Caco-2 (cell line): ENCODE measurements at regions of chr19 and their contacts with region 1.

Region 1: GRCh38 chr19:41449079-41449864 is 6.3 kb downstream of the ERICH4 start:
- DNase-seq: peak; percentile 80 to 85
- H3K4me3 ChIP-seq: no peak overlapping the region
- H3K4me3 Mint-ChIP-seq: peak overlapping the region; percentile 49
- H3K27ac Mint-ChIP-seq: no peak overlapping the region
- H3K4me1 ChIP-seq: no peaks in the 10 kb centered on the region
- H3K4me1 Mint-ChIP-seq: no peaks in the 10 kb centered on the region
- H3K27me3 ChIP-seq: no peaks in the 10 kb centered on the region
- H3K27me3 Mint-ChIP-seq: peaks cover 4% of the 10 kb centered on the region
- CTCF ChIP-seq: peak; percentile 99

Region 2: GRCh38 chr19:41420101-41420880 is 29.0 kb before region 1 on chr19:
- CTCF ChIA-PET with region 1: no interaction called
- POLR2A ChIA-PET with region 1: no interaction called
- intact Hi-C with region 1: no loop called
- DNase-seq: no peak
- H3K4me3 ChIP-seq: no peak overlapping the region
- H3K4me3 Mint-ChIP-seq: no peak overlapping the region
- H3K27ac Mint-ChIP-seq: no peak overlapping the region
- H3K4me1 ChIP-seq: no peaks in the 10 kb centered on the region
- H3K4me1 Mint-ChIP-seq: no peaks in the 10 kb centered on the region
- H3K27me3 ChIP-seq: no peaks in the 10 kb centered on the region
- H3K27me3 Mint-ChIP-seq: no peaks in the 10 kb centered on the region
- CTCF ChIP-seq: no peak

Region 3: GRCh38 chr19:41537789-41538188 is 88.5 kb after region 1 on chr19:
- CTCF ChIA-PET with region 1: no interaction called
- POLR2A ChIA-PET with region 1: no interaction called
- intact Hi-C with region 1: loop called (anchors 1 kb)
- DNase-seq: no peak
- H3K4me3 ChIP-seq: no peak overlapping the region
- H3K4me3 Mint-ChIP-seq: no peak overlapping the region
- H3K27ac Mint-ChIP-seq: no peak overlapping the region
- H3K4me1 ChIP-seq: no peaks in the 10 kb centered on the region
- H3K4me1 Mint-ChIP-seq: no peaks in the 10 kb centered on the region
- H3K27me3 ChIP-seq: 0 out of 2 replicates have a peak, but pooled peaks cover 1% of the 10 kb centered on the region
- H3K27me3 Mint-ChIP-seq: peaks cover 25% of the 10 kb centered on the region
- CTCF ChIP-seq: peak in 1 of 2 experiments; percentile 31

Region 4: DNA sequence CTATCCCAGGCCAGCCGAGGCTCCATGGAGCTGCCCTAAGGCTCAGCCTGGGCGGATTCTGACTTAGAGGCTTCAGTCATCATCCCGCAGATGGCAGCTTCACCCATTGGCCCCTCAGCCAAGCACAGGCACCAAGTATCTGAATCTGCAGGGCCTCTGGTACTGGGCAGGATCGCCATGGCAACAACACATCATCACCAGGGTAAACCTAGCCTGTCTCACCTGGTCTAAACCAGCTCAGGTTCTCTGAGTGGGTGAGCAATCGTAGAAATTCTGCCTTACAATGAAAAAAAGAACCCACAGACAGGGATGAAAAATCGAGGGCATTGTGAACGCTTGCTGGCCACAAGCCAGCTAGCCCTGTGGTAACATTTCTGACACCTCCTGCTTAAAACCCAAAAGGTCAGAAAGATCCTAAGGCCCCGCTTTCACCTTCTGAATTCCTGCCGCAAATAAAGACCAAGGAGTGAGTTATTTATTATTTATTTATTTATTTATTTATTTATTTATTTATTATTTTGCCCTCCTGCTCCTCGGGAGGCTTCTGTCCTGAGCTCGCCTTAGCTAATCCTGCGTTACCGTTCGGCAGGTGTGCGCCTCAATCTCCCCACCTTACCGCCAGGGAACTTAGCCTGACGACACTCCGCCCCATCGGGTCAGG is 114.7 kb after region 1 on chr19:
- CTCF ChIA-PET with region 1: interaction called, 15 read pairs
- POLR2A ChIA-PET with region 1: no interaction called
- intact Hi-C with region 1: loop called (anchors 1 kb)
- DNase-seq: no peak
- H3K4me3 ChIP-seq: no peak overlapping the region
- H3K4me3 Mint-ChIP-seq: no peak overlapping the region
- H3K27ac Mint-ChIP-seq: no peak overlapping the region
- H3K4me1 ChIP-seq: no peaks in the 10 kb centered on the region
- H3K4me1 Mint-ChIP-seq: no peaks in the 10 kb centered on the region
- H3K27me3 ChIP-seq: no peaks in the 10 kb centered on the region
- H3K27me3 Mint-ChIP-seq: peaks cover 22% of the 10 kb centered on the region
- CTCF ChIP-seq: no peak

Region 5: DNA sequence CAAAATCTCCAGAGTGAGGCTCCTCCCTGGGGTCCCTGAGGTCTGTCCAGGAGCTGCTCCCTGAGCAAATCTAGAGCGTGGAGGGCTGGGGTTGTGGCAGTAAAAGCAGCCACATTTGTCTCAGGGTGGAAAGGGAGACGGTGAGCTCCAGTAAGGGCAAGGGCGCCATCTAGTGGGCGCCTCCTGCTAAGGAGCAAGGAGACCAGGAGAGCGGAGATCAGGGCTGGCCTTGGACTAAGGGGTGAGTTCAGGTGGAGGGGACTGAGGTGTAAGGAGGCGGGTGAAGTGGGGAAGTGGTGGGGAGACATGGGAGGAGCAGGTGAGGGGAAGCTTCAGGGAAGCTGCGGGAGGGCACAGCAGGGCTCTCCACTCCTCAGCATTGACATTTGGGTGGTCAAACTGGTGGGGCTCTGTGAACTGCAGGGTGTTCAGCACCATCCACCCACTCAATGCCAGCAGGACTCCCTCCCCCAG is 121.4 kb after region 1 on chr19:
- CTCF ChIA-PET with region 1: interaction called, 13 read pairs
- POLR2A ChIA-PET with region 1: no interaction called
- intact Hi-C with region 1: loop called (anchors 1 kb)
- DNase-seq: peak; percentile 80 to 83
- H3K4me3 ChIP-seq: no peak overlapping the region
- H3K4me3 Mint-ChIP-seq: no peak overlapping the region
- H3K27ac Mint-ChIP-seq: no peak overlapping the region
- H3K4me1 ChIP-seq: no peaks in the 10 kb centered on the region
- H3K4me1 Mint-ChIP-seq: no peaks in the 10 kb centered on the region
- H3K27me3 ChIP-seq: 0 out of 2 replicates have a peak, but pooled peaks cover 2% of the 10 kb centered on the region
- H3K27me3 Mint-ChIP-seq: peaks cover 10% of the 10 kb centered on the region
- CTCF ChIP-seq: peak; percentile 84 to 96

Region 6: GRCh38 chr19:41597600-41598041 is 148.3 kb after region 1 on chr19:
- CTCF ChIA-PET with region 1: interaction called, 3 read pairs
- POLR2A ChIA-PET with region 1: no interaction called
- intact Hi-C with region 1: loop called (anchors 1 kb)
- DNase-seq: peak; percentile 73
- H3K4me3 ChIP-seq: no peak overlapping the region
- H3K4me3 Mint-ChIP-seq: no peak overlapping the region
- H3K27ac Mint-ChIP-seq: no peak overlapping the region
- H3K4me1 ChIP-seq: no peaks in the 10 kb centered on the region
- H3K4me1 Mint-ChIP-seq: no peaks in the 10 kb centered on the region
- H3K27me3 ChIP-seq: no peaks in the 10 kb centered on the region
- H3K27me3 Mint-ChIP-seq: peaks cover 17% of the 10 kb centered on the region
- CTCF ChIP-seq: peak; percentile 92 to 95